Activated T-helper 1 cell treated with anti-CD3 and anti-CD28 coated beads, Interleukin-12 subunit alpha, Interleukin-12 subunit beta, Interleukin-2, Interleukin-4 antibody, amounts not matched to agents 30 ng/mL and 10 ng/mL and 1 ng/mL, durations not matched to agents 14 hours and 24 hours and 36 hours (primary cell): ENCODE measurements at regions of chr10 and their contacts with region 1.

Region 1: DNA sequence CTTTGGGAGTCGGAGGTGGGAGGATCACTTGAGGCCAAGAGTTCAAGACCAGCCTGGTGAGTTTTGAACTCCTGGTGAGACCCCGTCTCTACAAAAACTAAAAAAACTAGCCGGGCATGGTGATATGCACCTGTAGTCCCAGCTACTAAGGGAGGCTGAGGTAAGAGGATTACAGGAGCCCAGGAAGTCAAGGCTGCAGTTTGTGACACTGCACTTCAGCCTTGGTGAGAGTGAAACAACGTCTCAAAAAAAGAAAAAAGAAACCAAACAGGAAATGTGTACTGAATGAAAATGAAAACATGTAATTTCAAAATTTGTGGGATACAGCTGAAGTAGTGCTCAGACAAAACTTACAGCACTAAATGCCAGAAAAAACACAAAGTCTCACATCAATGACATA is 7.6 kb downstream of the ARHGAP12 start:
- DNase-seq: peak; percentile 6
- H3K4me3 Mint-ChIP-seq: peak overlapping the region; percentile 52
- H3K27ac Mint-ChIP-seq: peak overlapping the region; percentile 53
- H3K4me1 Mint-ChIP-seq: peaks cover 48% of the 10 kb centered on the region
- H3K27me3 Mint-ChIP-seq: no peaks in the 10 kb centered on the region

Region 2: GRCh38 chr10:32149252-32149955 is 228.4 kb after region 1 on chr10:
- intact Hi-C with region 1: loop called (anchors 5 kb)
- DNase-seq: peak; percentile 36
- H3K4me3 Mint-ChIP-seq: peak overlapping the region; percentile 45
- H3K27ac Mint-ChIP-seq: peak overlapping the region; percentile 94
- H3K4me1 Mint-ChIP-seq: peaks cover 41% of the 10 kb centered on the region
- H3K27me3 Mint-ChIP-seq: no peaks in the 10 kb centered on the region